Psoas muscle (tissue), 8 donors: ENCODE measurements at regions of chr17 and their contacts with region 1.

Region 1: GRCh38 chr17:48357779-48358602 is 72.0 kb downstream of the SKAP1 start:
- DNase-seq: no peak
- ATAC-seq: no peak
- H3K4me3 ChIP-seq: no peak overlapping the region
- H3K27ac ChIP-seq: no peak overlapping the region
- H3K4me1 ChIP-seq: no peaks in the 10 kb centered on the region
- H3K27me3 ChIP-seq: peaks cover 0 to 19% (median 7%) of the 10 kb centered on the region in 3 donors
- CTCF ChIP-seq: no peak

Region 2: GRCh38 chr17:48335858-48336500 is 22.0 kb before region 1 on chr17:
- intact Hi-C with region 1: loop called in 1 of 2 experiments (anchors 2 kb)
- DNase-seq: no peak
- ATAC-seq: peak in 1 of 4 donors; percentile 40
- H3K4me3 ChIP-seq: no peak overlapping the region
- H3K27ac ChIP-seq: no peak overlapping the region
- H3K4me1 ChIP-seq: no peaks in the 10 kb centered on the region
- H3K27me3 ChIP-seq: peaks cover 0 to 13% (median 8%) of the 10 kb centered on the region in 3 donors
- CTCF ChIP-seq: peak; percentile 72